ENCODE measurements at regions of chr9 and their contacts with region 1.

Region 1: DNA sequence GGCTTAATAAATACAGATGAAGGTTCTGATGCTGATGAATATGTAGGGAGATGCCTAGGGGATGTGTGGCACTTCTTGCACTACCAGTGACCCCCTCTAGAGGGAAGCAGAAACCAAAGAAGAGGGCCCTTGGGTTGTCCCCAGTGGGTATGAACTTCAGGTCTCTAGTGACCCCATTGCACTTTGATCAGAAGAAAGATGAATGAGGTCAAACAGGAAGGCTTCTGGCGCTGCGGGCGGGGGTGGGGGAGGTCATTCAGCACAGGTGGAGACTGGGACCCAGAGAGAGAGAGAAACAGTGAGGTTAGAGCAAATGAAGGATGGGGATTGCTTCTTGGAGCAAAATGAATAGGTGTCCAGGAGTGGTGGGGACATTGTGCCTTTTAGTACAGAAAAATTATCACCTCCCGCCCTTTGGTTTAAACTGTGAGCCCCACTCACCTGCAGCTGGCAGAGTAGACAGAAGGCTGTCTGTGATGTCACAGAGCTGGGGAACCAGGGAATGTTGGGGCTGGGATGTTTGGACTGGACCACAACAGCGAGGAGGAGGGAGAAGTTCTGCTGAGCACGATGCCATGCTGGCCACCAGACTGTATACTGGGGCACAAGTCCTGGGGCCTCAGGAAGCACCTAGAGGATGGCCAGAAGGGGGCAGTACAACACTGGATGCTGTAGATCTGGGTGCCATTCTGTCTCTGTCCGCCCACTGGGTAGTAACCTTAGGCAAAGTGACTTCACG is at the start of gene TEX48:
- DNase-seq: peak; percentile 91
- ATAC-seq: peak; percentile 87
- H3K4me3 Mint-ChIP-seq: peak within 1 kb of the TSS; percentile 39
- H3K27ac Mint-ChIP-seq: peak within 1 kb of the TSS; percentile 86
- H3K4me1 Mint-ChIP-seq: peaks cover 56% of the 10 kb centered on the region
- H3K27me3 Mint-ChIP-seq: peaks cover 5% of the 10 kb centered on the region
- total RNA-seq, gene TEX48: 0.69 to 0.75 TPM

Region 2: DNA sequence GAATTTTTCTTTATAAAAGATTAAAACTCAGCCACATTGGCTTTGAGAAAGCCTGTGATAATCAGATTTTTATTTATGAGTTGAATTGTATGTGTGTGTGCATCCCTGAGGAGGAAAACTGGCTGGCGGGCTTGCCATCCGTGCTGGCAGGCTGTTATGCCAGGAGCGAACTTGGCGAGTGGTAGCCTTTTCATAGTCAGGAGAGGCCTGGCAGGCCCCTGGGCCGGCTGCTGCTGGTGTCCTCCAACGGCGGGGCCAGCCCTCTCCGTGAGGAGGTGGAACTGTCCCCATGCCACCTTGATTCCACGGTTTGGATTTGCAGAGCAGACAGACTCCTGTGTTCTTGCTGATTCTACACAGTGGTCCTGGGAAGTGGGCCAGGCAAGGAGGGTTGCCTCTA is 762.4 kb before region 1 on chr9:
- CTCF ChIA-PET with region 1: no interaction called
- POLR2A ChIA-PET with region 1: no interaction called
- intact Hi-C with region 1: no loop called
- DNase-seq: no peak
- ATAC-seq: no peak
- H3K4me3 Mint-ChIP-seq: no peak overlapping the region
- H3K27ac Mint-ChIP-seq: no peak overlapping the region
- H3K4me1 Mint-ChIP-seq: no peaks in the 10 kb centered on the region
- H3K27me3 Mint-ChIP-seq: no peaks in the 10 kb centered on the region

Region 3: GRCh38 chr9:114291064-114291474 is 390.7 kb before region 1 on chr9:
- CTCF ChIA-PET with region 1: no interaction called
- POLR2A ChIA-PET with region 1: no interaction called
- intact Hi-C with region 1: no loop called
- DNase-seq: peak; percentile 83
- ATAC-seq: peak; percentile 42
- H3K4me3 Mint-ChIP-seq: no peak overlapping the region
- H3K27ac Mint-ChIP-seq: no peak overlapping the region
- H3K4me1 Mint-ChIP-seq: no peaks in the 10 kb centered on the region
- H3K27me3 Mint-ChIP-seq: peaks cover 2% of the 10 kb centered on the region

Region 4: DNA sequence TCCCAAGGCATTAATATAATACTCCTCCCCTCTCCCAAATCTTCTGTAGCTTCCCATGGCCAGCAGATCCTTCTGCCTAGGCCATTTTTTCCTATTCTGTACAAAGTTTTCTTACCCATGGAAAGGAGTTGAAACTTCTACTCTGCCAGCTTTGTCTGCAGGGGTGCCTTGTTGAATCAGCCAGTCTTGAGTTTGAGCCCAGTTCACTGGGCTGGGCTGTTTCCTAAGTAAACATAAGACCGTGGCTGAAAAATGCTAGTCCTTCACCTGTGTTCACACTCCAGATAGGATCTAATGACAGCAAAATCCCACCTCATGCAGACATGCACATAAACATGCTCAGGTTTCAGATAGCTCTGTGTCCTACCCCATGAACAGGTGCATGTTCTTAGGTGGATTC is 10.2 kb before region 1 on chr9:
- CTCF ChIA-PET with region 1: interaction called, 16 read pairs
- POLR2A ChIA-PET with region 1: interaction called, 3 read pairs
- intact Hi-C with region 1: no loop called
- DNase-seq: no peak
- ATAC-seq: no peak
- H3K4me3 Mint-ChIP-seq: no peak overlapping the region
- H3K27ac Mint-ChIP-seq: no peak overlapping the region
- H3K4me1 Mint-ChIP-seq: peaks cover 26% of the 10 kb centered on the region
- H3K27me3 Mint-ChIP-seq: peaks cover 4% of the 10 kb centered on the region

Region 5: GRCh38 chr9:114738581-114739316 is 57.0 kb after region 1 on chr9:
- CTCF ChIA-PET with region 1: interaction called, 76 read pairs
- POLR2A ChIA-PET with region 1: no interaction called
- intact Hi-C with region 1: loop called (anchors 1 kb)
- DNase-seq: peak; percentile 80
- ATAC-seq: peak; percentile 70
- H3K4me3 Mint-ChIP-seq: no peak overlapping the region
- H3K27ac Mint-ChIP-seq: peak overlapping the region; percentile 84
- H3K4me1 Mint-ChIP-seq: peaks cover 56% of the 10 kb centered on the region
- H3K27me3 Mint-ChIP-seq: no peaks in the 10 kb centered on the region

Region 6: GRCh38 chr9:114906908-114907571 is 225.3 kb after region 1 on chr9:
- CTCF ChIA-PET with region 1: interaction called, 95 read pairs
- POLR2A ChIA-PET with region 1: interaction called, 4 read pairs
- intact Hi-C with region 1: loop called (anchors 1 kb)
- DNase-seq: peak; percentile 49
- ATAC-seq: peak; percentile 23
- H3K4me3 Mint-ChIP-seq: no peak overlapping the region
- H3K27ac Mint-ChIP-seq: peak overlapping the region; percentile 86
- H3K4me1 Mint-ChIP-seq: peaks cover 58% of the 10 kb centered on the region
- H3K27me3 Mint-ChIP-seq: no peaks in the 10 kb centered on the region

Region 7: DNA sequence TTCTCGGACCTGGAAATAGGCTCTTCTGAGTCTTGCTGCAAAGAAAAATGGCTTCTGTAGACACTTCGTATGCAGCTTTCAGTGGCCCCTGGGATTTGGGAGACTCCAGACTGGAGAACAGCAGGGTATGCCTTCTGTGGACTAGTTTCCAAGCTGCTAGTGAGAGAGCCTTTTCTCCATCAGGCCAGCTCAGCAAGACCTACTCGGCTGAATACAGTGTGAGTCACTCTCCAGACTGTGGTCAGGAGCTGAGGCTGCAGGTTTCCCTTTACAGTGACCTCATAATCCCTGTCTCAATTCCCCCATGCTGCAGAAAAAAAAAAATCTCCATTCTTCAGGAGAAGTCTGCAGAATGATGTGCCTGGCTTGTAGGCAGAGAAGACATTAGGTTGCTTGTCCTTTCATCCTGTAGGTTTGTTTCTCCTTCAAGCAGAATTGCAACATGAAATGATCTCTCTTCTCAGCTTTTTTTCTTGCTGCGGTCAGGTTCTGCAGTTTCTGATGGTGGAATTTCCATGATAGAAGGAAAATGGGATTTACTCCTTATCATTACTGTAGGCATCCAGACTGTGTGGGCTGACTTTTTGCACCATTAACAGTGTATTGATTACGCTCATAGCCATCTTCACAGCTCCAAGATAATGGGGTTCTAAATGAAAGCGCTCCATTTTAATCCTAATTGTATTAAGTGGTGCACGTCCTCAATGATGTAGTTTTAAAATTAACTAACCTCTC is 326.9 kb after region 1 on chr9:
- CTCF ChIA-PET with region 1: interaction called, 59 read pairs
- POLR2A ChIA-PET with region 1: no interaction called
- intact Hi-C with region 1: no loop called
- DNase-seq: peak; percentile 62
- ATAC-seq: peak; percentile 45
- H3K4me3 Mint-ChIP-seq: no peak overlapping the region
- H3K27ac Mint-ChIP-seq: peak overlapping the region; percentile 11
- H3K4me1 Mint-ChIP-seq: peaks cover 85% of the 10 kb centered on the region
- H3K27me3 Mint-ChIP-seq: no peaks in the 10 kb centered on the region

Region 8: GRCh38 chr9:115524453-115525059 is 842.8 kb after region 1 on chr9:
- CTCF ChIA-PET with region 1: interaction called, 3 read pairs
- POLR2A ChIA-PET with region 1: no interaction called
- intact Hi-C with region 1: loop called (anchors 1 to 5 kb)
- DNase-seq: peak; percentile 16
- ATAC-seq: no peak
- H3K4me3 Mint-ChIP-seq: no peak overlapping the region
- H3K27ac Mint-ChIP-seq: no peak overlapping the region
- H3K4me1 Mint-ChIP-seq: no peaks in the 10 kb centered on the region
- H3K27me3 Mint-ChIP-seq: peaks cover 28% of the 10 kb centered on the region